MCF 10A (cell line): ENCODE measurements at regions of chr3 and their contacts with region 1.

Region 1: DNA sequence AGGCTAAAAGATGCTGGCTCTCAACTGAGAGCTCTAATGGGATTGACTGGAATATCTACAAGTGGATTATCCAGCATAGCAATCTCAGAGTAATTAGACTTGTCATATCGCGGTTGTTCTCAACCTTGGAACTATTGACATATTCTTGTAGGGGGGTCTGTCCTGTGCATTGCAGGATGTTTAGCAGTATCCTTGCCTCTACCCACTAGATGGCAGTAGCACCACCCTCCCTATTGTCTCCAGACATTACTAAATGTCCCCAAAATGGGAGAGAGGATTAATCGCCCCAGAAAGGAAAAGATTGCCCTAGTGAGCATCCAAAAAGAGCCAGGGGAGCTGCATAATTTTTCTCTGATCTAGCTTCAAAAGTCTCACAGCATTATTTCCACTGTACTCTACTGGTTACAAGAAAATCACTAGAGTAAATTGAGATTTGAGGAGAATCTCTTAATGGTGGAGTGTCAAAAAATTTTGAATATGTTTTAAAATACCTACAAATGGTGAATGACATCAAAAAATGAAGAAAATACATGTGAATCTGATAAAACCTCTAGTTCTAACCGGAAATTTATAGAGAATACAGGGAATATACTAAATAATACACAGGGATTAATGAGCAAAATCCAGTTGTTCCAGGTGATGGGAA is 388.2 kb upstream of the AGTR1 start:
- DNase-seq: peak; percentile 55
- H3K4me3 Mint-ChIP-seq: no peak overlapping the region
- H3K27ac Mint-ChIP-seq: no peak overlapping the region
- H3K4me1 Mint-ChIP-seq: no peaks in the 10 kb centered on the region
- H3K27me3 Mint-ChIP-seq: peaks cover 13% of the 10 kb centered on the region
- CTCF ChIP-seq: peak; percentile 65

Region 2: GRCh38 chr3:147744967-147745366 is 564.5 kb before region 1 on chr3:
- CTCF ChIA-PET with region 1: no interaction called
- POLR2A ChIA-PET with region 1: no interaction called
- intact Hi-C with region 1: no loop called
- DNase-seq: no peak
- H3K4me3 Mint-ChIP-seq: no peak overlapping the region
- H3K27ac Mint-ChIP-seq: no peak overlapping the region
- H3K4me1 Mint-ChIP-seq: no peaks in the 10 kb centered on the region
- H3K27me3 Mint-ChIP-seq: peaks cover 17% of the 10 kb centered on the region
- CTCF ChIP-seq: no peak

Region 3: DNA sequence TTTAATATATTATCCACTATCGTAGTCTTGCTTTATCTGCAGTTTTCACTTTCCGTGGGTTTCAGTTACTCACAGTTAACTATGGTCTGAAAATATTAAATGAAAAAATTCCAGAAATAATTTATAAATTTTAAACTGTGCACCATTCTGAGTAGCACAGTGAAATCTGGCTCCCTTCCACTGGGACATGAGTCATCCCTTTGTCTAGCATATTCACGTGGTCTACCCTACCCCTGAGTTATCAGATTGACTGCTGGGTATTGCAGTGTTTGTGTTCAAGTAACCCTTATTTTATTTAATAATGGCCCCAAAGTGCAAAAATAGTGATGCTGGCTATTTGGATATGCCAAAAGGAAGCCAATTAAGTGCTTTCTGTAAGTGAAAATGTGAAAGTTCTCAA is 151.3 kb before region 1 on chr3:
- CTCF ChIA-PET with region 1: no interaction called
- POLR2A ChIA-PET with region 1: no interaction called
- intact Hi-C with region 1: no loop called
- DNase-seq: peak; percentile 85
- H3K4me3 Mint-ChIP-seq: no peak overlapping the region
- H3K27ac Mint-ChIP-seq: no peak overlapping the region
- H3K4me1 Mint-ChIP-seq: no peaks in the 10 kb centered on the region
- H3K27me3 Mint-ChIP-seq: peaks cover 2% of the 10 kb centered on the region
- CTCF ChIP-seq: no peak

Region 4: GRCh38 chr3:148366743-148367410 is 57.4 kb after region 1 on chr3:
- CTCF ChIA-PET with region 1: no interaction called
- POLR2A ChIA-PET with region 1: no interaction called
- intact Hi-C with region 1: loop called (anchors 1 kb)
- DNase-seq: peak; percentile 25
- H3K4me3 Mint-ChIP-seq: no peak overlapping the region
- H3K27ac Mint-ChIP-seq: no peak overlapping the region
- H3K4me1 Mint-ChIP-seq: no peaks in the 10 kb centered on the region
- H3K27me3 Mint-ChIP-seq: peaks cover 95% of the 10 kb centered on the region
- CTCF ChIP-seq: peak; percentile 17

Region 5: DNA sequence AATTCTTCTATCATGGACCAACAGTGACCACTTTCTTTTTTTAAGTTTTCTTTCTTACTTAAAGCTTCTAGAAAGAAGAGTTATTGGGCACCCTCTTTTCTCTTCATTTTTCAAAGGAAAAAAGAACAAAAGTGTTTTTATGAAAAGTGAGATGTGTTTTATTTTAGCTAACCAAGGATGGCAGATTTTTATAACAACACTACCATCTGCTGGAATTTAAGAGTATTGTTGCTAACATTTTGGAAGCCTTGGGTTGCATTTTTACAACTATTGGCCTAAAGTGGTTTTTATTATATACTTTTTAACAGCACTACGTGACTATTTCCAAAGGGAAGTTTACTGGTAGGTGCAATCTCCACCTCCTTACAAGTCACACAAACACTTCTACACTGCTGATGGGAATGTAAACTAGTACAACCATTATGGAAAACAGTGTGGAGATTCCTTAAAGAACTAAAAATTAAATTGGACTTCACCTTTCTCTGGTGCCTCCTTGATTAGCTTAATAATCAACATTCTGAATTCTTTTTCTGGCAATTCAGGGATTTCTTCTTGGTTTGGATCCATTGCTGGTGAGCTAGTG is 150.5 kb after region 1 on chr3:
- CTCF ChIA-PET with region 1: no interaction called
- POLR2A ChIA-PET with region 1: no interaction called
- intact Hi-C with region 1: no loop called
- DNase-seq: no peak
- H3K4me3 Mint-ChIP-seq: no peak overlapping the region
- H3K27ac Mint-ChIP-seq: no peak overlapping the region
- H3K4me1 Mint-ChIP-seq: no peaks in the 10 kb centered on the region
- H3K27me3 Mint-ChIP-seq: peaks cover 15% of the 10 kb centered on the region
- CTCF ChIP-seq: peak; percentile 25

Region 6: DNA sequence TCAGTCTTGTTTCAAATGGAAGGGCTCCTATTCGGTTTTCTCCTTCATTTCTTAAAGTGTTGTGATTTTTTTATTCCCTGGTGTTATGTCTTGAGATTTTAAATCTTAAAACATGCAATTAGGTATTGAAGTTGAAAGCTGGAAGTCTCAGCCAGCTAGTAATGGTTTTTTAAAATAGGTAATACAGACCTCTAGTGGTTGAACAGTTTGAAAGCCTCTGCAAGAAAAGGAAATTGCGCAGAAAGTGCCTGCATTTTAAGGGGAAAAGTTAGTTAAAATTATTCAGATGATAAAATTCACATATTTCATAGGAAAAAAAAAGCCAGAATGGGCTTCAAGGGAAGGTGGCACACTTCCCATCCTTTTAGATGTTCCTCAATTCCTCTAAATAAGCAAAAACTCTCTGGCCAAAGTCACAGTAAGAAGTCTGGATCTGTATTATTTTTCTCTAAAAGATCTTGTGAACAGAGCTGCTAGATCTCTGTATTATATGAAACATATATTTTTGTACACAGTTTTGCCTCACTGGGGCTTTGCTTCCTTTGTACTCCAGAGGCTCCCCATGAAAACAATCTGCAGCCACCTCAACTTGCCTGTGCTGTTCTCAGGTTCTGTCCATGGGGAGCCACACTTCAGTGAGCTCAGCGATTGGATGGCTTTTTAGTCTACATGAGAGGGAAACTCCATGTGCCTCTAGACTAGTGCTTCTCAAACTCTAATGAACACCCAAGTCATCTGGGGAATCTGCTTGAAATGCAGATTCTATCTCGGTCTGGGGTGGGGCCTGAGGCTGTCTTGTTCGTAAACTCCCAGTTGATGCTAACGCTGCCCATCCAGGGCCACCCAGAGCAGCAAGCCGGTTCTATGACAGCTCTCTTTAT is 409.7 kb after region 1 on chr3:
- CTCF ChIA-PET with region 1: interaction called, 5 read pairs
- POLR2A ChIA-PET with region 1: no interaction called
- intact Hi-C with region 1: loop called (anchors 1 kb)
- DNase-seq: peak; percentile 12
- H3K4me3 Mint-ChIP-seq: no peak overlapping the region
- H3K27ac Mint-ChIP-seq: no peak overlapping the region
- H3K4me1 Mint-ChIP-seq: no peaks in the 10 kb centered on the region
- H3K27me3 Mint-ChIP-seq: peaks cover 71% of the 10 kb centered on the region
- CTCF ChIP-seq: peak; percentile 44

Region 7: GRCh38 chr3:148943506-148944205 is 634.1 kb after region 1 on chr3:
- CTCF ChIA-PET with region 1: no interaction called
- POLR2A ChIA-PET with region 1: no interaction called
- intact Hi-C with region 1: loop called (anchors 10 kb)
- DNase-seq: peak; percentile 91
- H3K4me3 Mint-ChIP-seq: no peak overlapping the region
- H3K27ac Mint-ChIP-seq: no peak overlapping the region
- H3K4me1 Mint-ChIP-seq: no peaks in the 10 kb centered on the region
- H3K27me3 Mint-ChIP-seq: peaks cover 53% of the 10 kb centered on the region
- CTCF ChIP-seq: peak; percentile 71